OCI-LY7 (cell line): ENCODE measurements at regions of chr3 and their contacts with region 1.

Region 1: DNA sequence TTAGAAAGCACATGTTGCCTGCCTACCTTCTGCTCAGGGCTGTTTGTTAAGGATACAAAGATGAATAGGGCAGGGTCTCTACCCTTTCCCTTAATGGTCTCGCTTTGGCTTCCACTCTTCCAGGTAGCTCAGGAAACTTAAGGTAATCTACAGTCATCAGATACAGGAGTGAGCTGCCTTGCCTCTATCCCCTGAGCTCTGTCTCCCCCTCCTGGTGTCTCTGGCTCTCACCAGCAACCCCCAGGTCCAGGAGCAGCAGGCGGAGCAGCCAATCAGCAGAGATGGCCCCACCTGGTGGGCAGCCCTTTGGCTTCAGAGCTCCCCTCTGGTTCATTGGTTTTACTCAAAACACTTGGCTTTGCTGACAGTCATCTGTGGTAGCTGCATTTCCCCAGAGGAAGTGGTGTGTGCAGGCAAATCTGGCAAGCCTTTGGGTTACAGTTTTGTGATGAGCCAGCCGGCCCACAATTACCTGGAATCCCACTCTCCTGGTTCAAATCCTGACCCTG is 8.5 kb upstream of the CX3CR1 start:
- DNase-seq: peak; percentile 98
- H3K4me3 ChIP-seq: peak overlapping the region; percentile 31
- H3K27ac ChIP-seq: peak overlapping the region; percentile 61
- H3K4me1 ChIP-seq: peaks cover 37% of the 10 kb centered on the region
- CTCF ChIP-seq: peak; percentile 99

Region 2: DNA sequence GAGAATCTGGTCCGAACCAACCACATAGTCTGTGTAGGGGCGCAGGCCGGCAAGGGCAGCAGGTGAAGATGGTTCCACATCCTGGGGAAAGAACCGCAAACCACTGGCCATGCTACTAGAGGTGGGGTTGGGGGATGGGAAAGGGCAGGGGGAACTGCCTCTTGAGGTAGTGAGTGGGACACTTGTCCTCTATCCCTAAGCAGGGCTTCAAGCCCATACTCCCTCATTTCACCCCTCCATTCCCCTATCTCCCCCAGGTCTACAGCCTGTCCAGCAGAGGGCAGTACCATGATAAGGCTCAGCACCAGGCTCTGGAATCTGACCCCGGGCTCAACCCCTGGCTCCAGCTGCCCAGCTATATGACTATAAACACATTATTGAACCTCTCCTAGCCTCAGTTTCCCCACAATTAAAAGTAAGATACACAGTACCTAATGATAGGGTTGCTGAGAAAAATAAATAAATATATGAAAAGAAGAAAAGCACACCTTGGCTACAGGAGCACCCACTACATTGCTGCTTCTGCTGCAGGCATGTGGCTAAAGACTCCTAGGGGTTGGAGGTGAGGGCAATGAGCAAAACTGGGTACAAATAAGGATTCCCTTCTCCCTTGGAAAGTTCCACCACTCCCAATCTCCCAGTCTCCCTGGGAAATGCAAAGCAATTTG is 187.2 kb before region 1 on chr3:
- CTCF ChIA-PET with region 1: no interaction called
- POLR2A ChIA-PET with region 1: no interaction called
- intact Hi-C with region 1: loop called (anchors 1 kb)
- DNase-seq: peak; percentile 71
- H3K4me3 ChIP-seq: no peak overlapping the region
- H3K27ac ChIP-seq: peak overlapping the region; percentile 9
- H3K4me1 ChIP-seq: peaks cover 45% of the 10 kb centered on the region
- CTCF ChIP-seq: peak; percentile 89

Region 3: DNA sequence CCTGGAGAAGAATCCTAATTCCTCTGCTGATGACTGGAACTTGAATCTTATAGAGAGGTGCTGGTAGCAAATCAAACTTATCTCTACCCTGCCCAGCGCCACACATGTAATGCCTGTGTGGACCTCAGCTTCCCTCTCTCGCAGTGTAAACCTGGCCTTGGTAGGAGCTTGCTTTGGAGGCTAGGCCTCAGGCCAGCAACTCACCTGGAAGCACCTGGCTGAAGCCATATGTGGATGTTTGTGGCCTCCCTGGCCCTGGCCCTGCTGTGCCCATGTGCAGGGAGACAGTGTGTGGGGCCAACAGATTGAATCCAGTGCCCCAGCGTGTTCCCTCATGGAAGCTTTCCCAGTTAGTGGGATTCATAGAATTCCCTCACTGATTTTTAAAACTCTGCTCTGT is 172.5 kb before region 1 on chr3:
- CTCF ChIA-PET with region 1: no interaction called
- POLR2A ChIA-PET with region 1: no interaction called
- intact Hi-C with region 1: no loop called
- DNase-seq: no peak
- H3K4me3 ChIP-seq: no peak overlapping the region
- H3K27ac ChIP-seq: no peak overlapping the region
- H3K4me1 ChIP-seq: peaks cover 27% of the 10 kb centered on the region
- CTCF ChIP-seq: no peak

Region 4: DNA sequence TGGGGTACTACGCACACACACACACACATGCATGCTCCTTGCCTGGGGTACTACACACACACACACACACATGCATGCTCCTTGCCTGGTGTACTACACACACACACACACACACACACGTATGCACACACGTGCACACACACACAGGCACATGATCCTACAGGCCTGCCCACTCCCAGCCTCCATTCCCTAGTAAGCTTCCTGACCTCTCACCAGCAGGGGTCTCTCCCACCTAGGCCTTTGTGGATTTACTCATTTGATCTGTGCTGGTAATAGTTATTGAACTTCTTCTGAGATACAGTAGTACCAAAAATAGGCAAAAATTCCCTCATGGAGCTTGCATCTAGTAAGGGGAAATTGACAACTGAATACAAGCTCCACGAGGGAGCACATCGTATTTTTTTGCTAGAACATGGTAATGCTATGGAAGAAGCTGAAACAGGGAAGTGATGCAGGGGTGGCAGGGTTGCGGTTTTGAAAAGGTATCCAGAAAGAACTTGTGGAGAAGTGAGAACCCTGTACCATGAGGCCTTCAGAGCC is 161.8 kb before region 1 on chr3:
- CTCF ChIA-PET with region 1: interaction called, 8 read pairs
- POLR2A ChIA-PET with region 1: interaction called, 4 read pairs
- intact Hi-C with region 1: loop called (anchors 2 kb)
- DNase-seq: peak; percentile 48
- H3K4me3 ChIP-seq: no peak overlapping the region
- H3K27ac ChIP-seq: no peak overlapping the region
- H3K4me1 ChIP-seq: peaks cover 65% of the 10 kb centered on the region
- CTCF ChIP-seq: peak; percentile 79

Region 5: DNA sequence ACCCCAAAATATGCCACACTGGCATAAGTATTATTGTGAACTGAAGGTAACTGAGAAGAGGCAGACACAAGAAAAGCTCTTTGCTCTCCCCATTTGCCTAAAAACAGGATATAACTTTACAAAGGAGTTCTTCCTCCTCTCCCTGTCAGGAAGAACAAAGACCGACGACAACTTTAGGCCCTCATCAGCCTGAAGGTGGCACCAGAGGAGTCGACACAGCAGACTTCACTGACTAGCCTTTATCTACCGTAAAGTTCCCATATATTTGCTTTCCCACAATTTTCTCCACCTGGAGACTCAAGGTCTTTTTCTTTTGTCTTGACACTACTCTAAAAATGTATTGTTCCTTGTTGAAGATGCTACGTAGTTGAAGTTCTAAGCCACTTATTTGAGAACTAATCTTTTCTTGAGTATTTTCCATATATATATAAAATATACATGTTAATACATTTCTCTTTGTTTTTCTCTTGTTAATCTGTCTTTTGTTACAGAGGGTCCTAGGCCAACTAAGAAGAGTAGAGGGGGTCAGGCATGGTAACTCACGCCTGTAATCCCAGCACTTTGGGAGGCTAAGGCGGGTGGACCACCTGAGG is 79.8 kb before region 1 on chr3:
- CTCF ChIA-PET with region 1: interaction called, 12 read pairs
- POLR2A ChIA-PET with region 1: interaction called, 5 read pairs
- intact Hi-C with region 1: loop called (anchors 1 kb)
- DNase-seq: peak; percentile 74
- H3K4me3 ChIP-seq: no peak overlapping the region
- H3K27ac ChIP-seq: no peak overlapping the region
- H3K4me1 ChIP-seq: peaks cover 31% of the 10 kb centered on the region
- CTCF ChIP-seq: peak; percentile 92

Region 6: GRCh38 chr3:39255503-39256325 is 32.6 kb before region 1 on chr3:
- CTCF ChIA-PET with region 1: interaction called, 8 read pairs
- POLR2A ChIA-PET with region 1: interaction called, 3 read pairs
- intact Hi-C with region 1: loop called (anchors 2 kb)
- DNase-seq: peak; percentile 95
- H3K4me3 ChIP-seq: peak overlapping the region; percentile 45
- H3K27ac ChIP-seq: peak overlapping the region; percentile 91
- H3K4me1 ChIP-seq: peaks cover 59% of the 10 kb centered on the region
- CTCF ChIP-seq: no peak